ENCODE measurements at regions of chr14 and their contacts with region 1.

Region 1: GRCh38 chr14:53757732-53758131 is 198.9 kb downstream of the BMP4 start:
- DNase-seq: no peak
- H3K4me3 ChIP-seq: no peak overlapping the region
- H3K27ac ChIP-seq: no peak overlapping the region
- H3K4me1 ChIP-seq: no peaks in the 10 kb centered on the region
- H3K27me3 ChIP-seq: no peaks in the 10 kb centered on the region
- CTCF ChIP-seq: no peak
- POLR2A ChIP-seq: no peak

Region 2: DNA sequence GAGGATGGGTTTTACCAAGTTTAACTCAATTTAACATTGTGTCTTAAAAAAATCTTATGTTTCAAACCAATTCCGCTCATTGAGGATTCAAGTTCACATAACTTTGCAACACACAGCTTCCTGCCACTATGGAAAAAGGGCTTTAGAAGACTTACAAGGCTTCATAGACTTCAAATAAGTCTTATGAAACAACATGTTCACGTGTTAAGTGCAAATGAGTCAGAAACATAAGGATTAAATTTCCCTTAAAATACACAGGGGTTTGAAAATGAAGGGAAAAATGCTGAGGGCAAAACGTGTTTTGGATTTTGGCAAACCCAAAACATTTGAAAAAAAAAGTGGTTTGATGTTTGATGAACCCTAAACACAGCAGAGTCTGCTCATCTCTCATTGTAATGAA is 165.9 kb before region 1 on chr14:
- intact Hi-C with region 1: loop called (anchors 5 kb)
- DNase-seq: no peak
- H3K4me3 ChIP-seq: no peak overlapping the region
- H3K27ac ChIP-seq: no peak overlapping the region
- H3K4me1 ChIP-seq: no peaks in the 10 kb centered on the region
- H3K27me3 ChIP-seq: no peaks in the 10 kb centered on the region
- CTCF ChIP-seq: no peak
- POLR2A ChIP-seq: no peak

Measured in breast epithelium (tissue), 4 donors.